MCF 10A (cell line): ENCODE measurements at regions of chr6 and their contacts with region 1.

Region 1: DNA sequence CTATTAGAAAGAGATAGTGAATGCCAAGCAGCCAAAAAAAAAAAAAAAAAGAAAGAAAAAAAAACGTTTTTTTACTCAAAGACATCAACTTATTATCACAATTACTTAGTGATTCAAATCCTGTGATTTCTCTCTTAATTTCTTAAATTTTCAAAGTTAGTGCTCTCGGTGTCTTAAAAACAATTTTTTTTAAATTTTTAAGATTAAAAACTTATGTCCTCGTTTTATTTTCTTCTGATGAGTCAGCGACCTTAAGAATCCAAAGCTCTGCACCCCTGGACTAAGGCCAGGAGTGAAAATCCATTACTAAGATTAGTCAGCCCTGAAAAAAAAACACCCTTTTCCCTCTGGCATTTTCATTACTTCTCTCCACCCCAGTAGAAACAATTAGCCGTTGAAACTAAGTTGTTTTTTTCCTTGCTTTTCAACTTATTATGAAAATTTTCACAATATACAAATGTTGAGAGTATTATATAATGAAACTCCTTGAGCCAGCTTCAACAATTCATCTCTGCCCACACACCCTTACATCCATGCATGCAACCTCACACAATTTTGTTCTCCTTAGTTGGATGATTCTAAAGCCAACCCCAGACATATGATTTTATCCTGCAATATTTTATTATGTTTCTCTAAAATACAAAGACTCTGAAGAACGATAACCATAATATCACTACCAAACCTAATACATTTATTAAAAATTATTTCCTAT is 85.6 kb upstream of the CARMIL1 start:
- DNase-seq: peak; percentile 97
- H3K4me3 Mint-ChIP-seq: peak overlapping the region; percentile 56
- H3K27ac Mint-ChIP-seq: peak overlapping the region; percentile 66
- H3K4me1 Mint-ChIP-seq: peaks cover 25% of the 10 kb centered on the region
- H3K27me3 Mint-ChIP-seq: no peaks in the 10 kb centered on the region
- CTCF ChIP-seq: no peak

Region 2: GRCh38 chr6:24402697-24403501 is 790.7 kb before region 1 on chr6 and contains the start of gene MRS2:
- CTCF ChIA-PET with region 1: no interaction called
- POLR2A ChIA-PET with region 1: no interaction called
- intact Hi-C with region 1: no loop called
- DNase-seq: peak; percentile 92
- H3K4me3 Mint-ChIP-seq: peak within 1 kb of the TSS; percentile 97
- H3K27ac Mint-ChIP-seq: peak within 1 kb of the TSS; percentile 88
- H3K4me1 Mint-ChIP-seq: peaks cover 11% of the 10 kb centered on the region
- H3K27me3 Mint-ChIP-seq: no peaks in the 10 kb centered on the region
- CTCF ChIP-seq: no peak
- total RNA-seq, gene MRS2: 21.2 and 23.0 TPM in 2 replicates

Region 3: DNA sequence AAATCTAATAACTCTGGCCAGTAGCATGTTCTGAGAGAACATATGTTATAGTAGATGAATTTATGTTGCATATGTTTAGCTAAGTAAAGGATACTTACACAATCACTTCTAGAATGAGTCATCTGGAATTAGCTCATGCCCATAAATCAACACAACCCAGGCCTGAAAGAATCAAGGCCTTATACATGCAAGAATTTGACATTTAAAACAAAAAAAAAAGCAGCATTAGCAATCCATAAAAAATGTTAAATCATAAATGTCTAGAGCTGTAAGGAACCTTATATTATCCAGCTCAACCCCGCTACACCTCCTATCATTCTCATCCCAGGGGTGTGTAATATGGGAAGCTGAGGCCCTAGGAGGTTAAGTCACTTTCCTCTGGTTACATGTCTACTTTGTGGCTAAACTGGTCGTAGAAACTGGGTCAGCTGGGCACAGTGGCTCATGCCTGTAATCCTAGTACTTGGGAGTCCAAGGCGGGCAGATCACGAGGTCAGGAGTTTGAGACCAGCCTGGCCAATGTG is 19.6 kb before region 1 on chr6:
- CTCF ChIA-PET with region 1: interaction called, 4 read pairs
- POLR2A ChIA-PET with region 1: interaction called, 53 read pairs
- intact Hi-C with region 1: no loop called
- DNase-seq: peak; percentile 93
- H3K4me3 Mint-ChIP-seq: no peak overlapping the region
- H3K27ac Mint-ChIP-seq: peak overlapping the region; percentile 41
- H3K4me1 Mint-ChIP-seq: peaks cover 53% of the 10 kb centered on the region
- H3K27me3 Mint-ChIP-seq: no peaks in the 10 kb centered on the region
- CTCF ChIP-seq: no peak

Region 4: DNA sequence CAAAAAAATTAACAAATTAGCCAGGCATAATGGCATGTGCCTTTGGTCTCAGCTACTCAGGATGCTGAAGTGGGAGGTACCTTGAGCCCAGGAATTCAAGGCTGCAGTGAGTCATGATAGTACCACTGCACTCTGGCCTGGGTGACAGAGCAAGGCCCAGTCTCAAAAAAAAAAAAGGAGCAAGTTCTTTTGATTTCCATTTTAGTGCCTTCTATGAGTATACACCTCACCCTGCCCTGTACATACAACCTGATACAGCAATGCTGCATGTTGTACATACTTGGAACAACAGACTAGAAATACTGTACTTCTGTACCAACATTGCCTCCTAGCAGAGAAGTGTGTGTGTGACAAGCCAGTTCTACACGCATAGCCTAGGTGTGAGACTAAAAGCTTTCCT is 11.7 kb before region 1 on chr6:
- CTCF ChIA-PET with region 1: interaction called, 5 read pairs
- POLR2A ChIA-PET with region 1: interaction called, 53 read pairs
- intact Hi-C with region 1: no loop called
- DNase-seq: peak; percentile 34
- H3K4me3 Mint-ChIP-seq: no peak overlapping the region
- H3K27ac Mint-ChIP-seq: no peak overlapping the region
- H3K4me1 Mint-ChIP-seq: peaks cover 8% of the 10 kb centered on the region
- H3K27me3 Mint-ChIP-seq: no peaks in the 10 kb centered on the region
- CTCF ChIP-seq: no peak